Activated CD4-positive, alpha-beta T cell treated with anti-CD3 and anti-CD28 coated beads, Interleukin-2, amount 10 ng/mL, durations not matched to agents 24 days and 14 days (primary cell): ENCODE measurements at regions of chr13 and their contacts with region 1.

Region 1: DNA sequence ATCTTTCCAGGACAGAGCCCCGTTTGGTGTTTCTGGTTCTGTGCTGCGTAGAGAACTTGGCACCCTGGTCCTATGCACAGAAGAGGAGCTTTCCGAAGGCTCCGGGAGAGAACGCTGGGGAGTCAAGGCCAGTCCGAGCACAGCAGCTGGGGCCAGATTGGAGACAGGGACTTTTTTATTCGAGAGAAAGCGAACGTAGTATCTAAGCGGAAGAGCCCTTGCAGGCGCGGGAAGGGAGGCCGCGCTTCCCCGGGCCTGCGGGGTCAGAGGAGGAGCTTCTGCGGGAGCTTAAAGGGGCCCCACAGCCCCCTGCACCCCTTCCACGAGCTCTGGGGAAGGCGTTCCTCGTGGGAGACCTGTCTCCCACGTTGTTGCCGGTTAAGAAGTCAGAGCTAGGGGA is 48.6 kb upstream of the ARHGEF7 start:
- DNase-seq: no peak
- H3K4me3 Mint-ChIP-seq: peak overlapping the region; percentile 63
- H3K27ac Mint-ChIP-seq: no peak overlapping the region
- H3K4me1 Mint-ChIP-seq: peaks cover 8% of the 10 kb centered on the region
- H3K27me3 Mint-ChIP-seq: peaks cover 62% of the 10 kb centered on the region

Region 2: GRCh38 chr13:111006506-111007031 is 60.0 kb before region 1 on chr13:
- intact Hi-C with region 1: no loop called
- DNase-seq: no peak
- H3K4me3 Mint-ChIP-seq: no peak overlapping the region
- H3K27ac Mint-ChIP-seq: no peak overlapping the region
- H3K4me1 Mint-ChIP-seq: peaks cover 10% of the 10 kb centered on the region
- H3K27me3 Mint-ChIP-seq: peaks cover 26% of the 10 kb centered on the region

Region 3: GRCh38 chr13:111219280-111219679 is 152.7 kb after region 1 on chr13:
- intact Hi-C with region 1: loop called (anchors 1 kb)
- DNase-seq: no peak
- H3K4me3 Mint-ChIP-seq: no peak overlapping the region
- H3K27ac Mint-ChIP-seq: no peak overlapping the region
- H3K4me1 Mint-ChIP-seq: peaks cover 14% of the 10 kb centered on the region
- H3K27me3 Mint-ChIP-seq: no peaks in the 10 kb centered on the region

Region 4: DNA sequence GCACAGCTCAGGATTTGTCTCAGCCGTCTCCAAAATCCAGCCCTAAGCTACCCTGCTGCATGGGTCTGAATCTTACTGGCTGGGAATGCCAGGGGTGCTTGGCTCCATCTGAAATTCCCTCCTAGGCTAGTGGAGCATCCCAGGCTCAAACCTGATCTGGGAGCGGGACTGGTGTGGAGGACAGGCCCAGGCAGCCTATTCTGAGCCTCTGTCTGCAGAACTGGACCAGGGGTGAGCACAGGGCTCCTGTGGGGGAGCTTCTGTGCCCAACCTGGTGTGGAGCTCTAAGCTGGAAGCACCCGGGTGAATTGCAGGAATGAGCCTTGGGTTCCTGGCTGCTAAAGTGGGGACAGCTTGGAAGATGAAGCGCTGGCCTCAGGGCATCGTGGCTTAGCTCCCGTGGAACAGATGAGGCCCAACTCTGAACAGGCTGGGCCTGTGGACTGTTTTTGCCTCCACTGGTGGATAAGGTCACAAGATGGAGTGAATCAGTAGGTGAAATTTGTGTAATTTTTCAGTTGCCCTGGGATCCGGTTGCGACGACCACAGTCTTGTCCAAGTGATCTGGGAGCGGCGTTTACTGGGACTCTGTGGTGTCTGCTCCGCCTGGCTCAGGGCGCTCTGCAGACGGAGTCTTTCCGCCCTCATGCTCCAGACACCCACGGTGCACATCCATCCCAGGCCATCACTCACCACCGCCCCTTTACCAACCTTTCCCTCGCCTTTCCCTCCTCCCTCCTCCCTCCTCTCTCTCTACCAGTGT is 333.4 kb after region 1 on chr13:
- intact Hi-C with region 1: loop called (anchors 5 kb)
- DNase-seq: no peak
- H3K4me3 Mint-ChIP-seq: no peak overlapping the region
- H3K27ac Mint-ChIP-seq: no peak overlapping the region
- H3K4me1 Mint-ChIP-seq: no peaks in the 10 kb centered on the region
- H3K27me3 Mint-ChIP-seq: no peaks in the 10 kb centered on the region